AG04449 (cell line): ENCODE measurements at regions of chr21 and their contacts with region 1.

Region 1: DNA sequence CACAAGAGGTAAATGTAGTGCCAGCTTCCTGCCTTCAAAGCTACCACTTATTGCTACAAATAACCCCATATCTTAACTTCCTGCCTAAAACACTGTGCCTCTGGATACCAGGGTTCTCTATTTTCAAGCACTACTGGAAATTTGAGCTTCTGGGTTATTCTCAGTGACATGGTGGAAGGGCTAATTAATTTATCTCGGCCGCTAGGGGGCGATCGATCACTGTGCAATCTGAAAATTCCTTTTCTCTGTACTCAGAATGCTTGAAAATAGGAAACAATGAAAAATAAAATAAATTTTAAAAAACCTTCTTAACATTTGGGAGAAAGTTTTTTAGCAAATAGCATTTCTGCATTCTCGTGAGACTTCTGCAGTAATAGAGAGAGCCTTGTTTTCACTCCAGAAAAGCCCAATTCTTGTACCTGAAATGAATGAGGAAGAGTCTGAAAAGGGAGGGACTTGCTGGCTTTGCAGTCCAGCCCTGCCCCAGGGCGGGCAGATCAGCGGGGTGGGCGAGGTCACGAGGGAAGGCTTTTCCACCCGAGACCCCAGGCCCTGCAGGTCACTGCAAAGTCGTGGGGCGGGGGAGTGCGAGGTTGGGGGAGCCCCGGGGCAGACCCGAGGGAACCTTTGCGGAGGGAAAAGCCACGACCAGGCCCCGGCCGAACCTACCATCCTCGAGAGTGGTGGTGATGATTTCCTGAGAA is 276.7 kb downstream of the PCP4 start:
- DNase-seq: no peak
- H3K4me3 ChIP-seq: no peak overlapping the region
- CTCF ChIP-seq: peak; percentile 40

Region 2: DNA sequence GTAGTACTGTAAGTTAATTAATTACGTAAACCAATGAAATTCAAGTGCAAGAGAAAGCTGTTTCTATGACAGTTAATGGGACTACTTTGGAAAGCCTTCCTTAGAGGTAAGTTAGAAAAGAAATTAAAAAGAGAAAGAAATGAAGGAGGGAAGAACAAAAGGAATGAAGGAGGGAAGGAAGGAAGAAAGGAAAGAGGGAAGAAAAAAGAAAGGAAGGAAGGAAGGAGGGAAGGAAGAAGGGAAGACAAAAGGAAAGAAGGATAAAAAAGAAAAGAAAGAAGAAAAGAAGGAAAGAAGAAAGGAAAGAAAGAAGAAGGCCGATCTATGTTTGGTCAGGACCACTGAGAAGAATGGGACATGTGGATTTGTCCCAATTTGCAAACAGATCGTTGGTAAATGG is 17.9 kb before region 1 on chr21:
- CTCF ChIA-PET with region 1: no interaction called
- POLR2A ChIA-PET with region 1: no interaction called
- DNase-seq: no peak
- H3K4me3 ChIP-seq: no peak overlapping the region
- CTCF ChIP-seq: no peak

Region 3: GRCh38 chr21:40385892-40386599 is 242.1 kb after region 1 on chr21:
- CTCF ChIA-PET with region 1: interaction called, 19 read pairs
- POLR2A ChIA-PET with region 1: no interaction called
- DNase-seq: no peak
- H3K4me3 ChIP-seq: no peak overlapping the region
- CTCF ChIP-seq: peak; percentile 89